B cell (primary cell): ENCODE measurements at regions of chr1 and their contacts with region 1.

Region 1: GRCh38 chr1:31422505-31423319 is 9.7 kb downstream of the SERINC2 start:
- DNase-seq: peak; percentile 84
- ATAC-seq: peak; percentile 46
- H3K4me3 ChIP-seq: peak overlapping the region in 3 of 5 experiments; percentile 2 to 51 (median 15)
- H3K4me3 Mint-ChIP-seq: peak overlapping the region; percentile 74
- H3K27ac ChIP-seq: peak overlapping the region; percentile 29 to 50
- H3K27ac Mint-ChIP-seq: peak overlapping the region; percentile 78
- H3K4me1 ChIP-seq: peaks cover 21 to 23% of the 10 kb centered on the region in 2 donors
- H3K4me1 Mint-ChIP-seq: peaks cover 26% of the 10 kb centered on the region
- H3K27me3 ChIP-seq: peaks cover 0 to 5% (median under 1%) of the 10 kb centered on the region in 4 experiments
- H3K27me3 Mint-ChIP-seq: peaks cover 8% of the 10 kb centered on the region
- CTCF ChIP-seq: peak; percentile 96

Region 2: GRCh38 chr1:31155216-31155841 is 267.4 kb before region 1 on chr1:
- CTCF ChIA-PET with region 1: interaction called, 3 read pairs
- POLR2A ChIA-PET with region 1: no interaction called
- intact Hi-C with region 1: loop called (anchors 2 kb)
- DNase-seq: peak; percentile 75
- ATAC-seq: peak; percentile 80
- H3K4me3 ChIP-seq: peak overlapping the region; percentile 53 to 76 (median 67)
- H3K4me3 Mint-ChIP-seq: peak overlapping the region; percentile 90
- H3K27ac ChIP-seq: peak overlapping the region in 1 of 2 donors; percentile 39
- H3K27ac Mint-ChIP-seq: peak overlapping the region; percentile 80
- H3K4me1 ChIP-seq: peaks cover 5 to 14% of the 10 kb centered on the region in 2 donors
- H3K4me1 Mint-ChIP-seq: peaks cover 9% of the 10 kb centered on the region
- H3K27me3 ChIP-seq: no peaks in the 10 kb centered on the region
- H3K27me3 Mint-ChIP-seq: no peaks in the 10 kb centered on the region
- CTCF ChIP-seq: peak; percentile 55

Region 3: GRCh38 chr1:31166462-31166861 is 256.2 kb before region 1 on chr1:
- CTCF ChIA-PET with region 1: interaction called, 10 read pairs
- POLR2A ChIA-PET with region 1: no interaction called
- intact Hi-C with region 1: no loop called
- DNase-seq: no peak
- ATAC-seq: no peak
- H3K4me3 ChIP-seq: no peak overlapping the region
- H3K4me3 Mint-ChIP-seq: no peak overlapping the region
- H3K27ac ChIP-seq: no peak overlapping the region
- H3K27ac Mint-ChIP-seq: no peak overlapping the region
- H3K4me1 ChIP-seq: no peaks in the 10 kb centered on the region
- H3K4me1 Mint-ChIP-seq: peaks cover 3% of the 10 kb centered on the region
- H3K27me3 ChIP-seq: no peaks in the 10 kb centered on the region
- H3K27me3 Mint-ChIP-seq: peaks cover 10% of the 10 kb centered on the region
- CTCF ChIP-seq: no peak

Region 4: DNA sequence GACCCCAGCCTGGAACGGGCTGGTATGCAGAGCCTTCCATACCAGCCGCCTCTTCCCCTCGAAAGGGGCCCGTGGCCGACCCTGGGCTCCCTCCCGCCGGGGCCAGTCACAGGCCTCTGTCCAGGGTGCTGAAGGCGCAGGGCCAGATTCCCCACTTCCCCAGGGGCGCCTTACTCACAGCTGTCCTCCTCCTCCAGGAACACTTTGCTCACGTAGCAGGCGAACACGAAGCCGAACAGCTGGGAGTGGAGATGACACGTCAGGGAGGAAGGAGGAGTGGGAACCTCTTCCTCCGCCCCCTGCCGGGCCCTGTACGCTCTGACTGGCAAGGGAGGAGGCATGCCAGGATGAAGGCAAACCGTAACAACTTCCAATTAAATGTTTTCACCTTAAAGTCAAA is 240.4 kb before region 1 on chr1:
- CTCF ChIA-PET with region 1: interaction called, 48 read pairs
- POLR2A ChIA-PET with region 1: no interaction called
- intact Hi-C with region 1: no loop called
- DNase-seq: peak; percentile 61
- ATAC-seq: peak; percentile 52
- H3K4me3 ChIP-seq: no peak overlapping the region
- H3K4me3 Mint-ChIP-seq: peak overlapping the region; percentile 34
- H3K27ac ChIP-seq: no peak overlapping the region
- H3K27ac Mint-ChIP-seq: no peak overlapping the region
- H3K4me1 ChIP-seq: peaks cover 10 to 15% of the 10 kb centered on the region in 2 donors
- H3K4me1 Mint-ChIP-seq: peaks cover 6% of the 10 kb centered on the region
- H3K27me3 ChIP-seq: peaks cover 0 to 44% (median 14%) of the 10 kb centered on the region in 4 experiments
- H3K27me3 Mint-ChIP-seq: peaks cover 54% of the 10 kb centered on the region
- CTCF ChIP-seq: no peak

Region 5: GRCh38 chr1:31296486-31297276 is 126.0 kb before region 1 on chr1 and contains the starts of genes SNRNP40 and ZCCHC17:
- CTCF ChIA-PET with region 1: interaction called, 7 read pairs
- POLR2A ChIA-PET with region 1: no interaction called
- intact Hi-C with region 1: loop called (anchors 1 kb)
- DNase-seq: peak; percentile 98
- ATAC-seq: peak; percentile 97
- H3K4me3 ChIP-seq: peak within 1 kb of the TSS; percentile 68 to 99 (median 77)
- H3K4me3 Mint-ChIP-seq: no peak within 1 kb of the TSS
- H3K27ac ChIP-seq: peak within 1 kb of the TSS; percentile 82 to 93
- H3K27ac Mint-ChIP-seq: peak within 1 kb of the TSS; percentile 63
- H3K4me1 ChIP-seq: peaks cover 23 to 25% of the 10 kb centered on the region in 2 donors
- H3K4me1 Mint-ChIP-seq: peaks cover 24% of the 10 kb centered on the region
- H3K27me3 ChIP-seq: no peaks in the 10 kb centered on the region
- H3K27me3 Mint-ChIP-seq: no peaks in the 10 kb centered on the region
- CTCF ChIP-seq: no peak
- total RNA-seq, gene SNRNP40: 65.6 and 67.7 TPM in 2 replicates
- total RNA-seq, gene ZCCHC17: 20.3 and 21.5 TPM in 2 replicates

Region 6: DNA sequence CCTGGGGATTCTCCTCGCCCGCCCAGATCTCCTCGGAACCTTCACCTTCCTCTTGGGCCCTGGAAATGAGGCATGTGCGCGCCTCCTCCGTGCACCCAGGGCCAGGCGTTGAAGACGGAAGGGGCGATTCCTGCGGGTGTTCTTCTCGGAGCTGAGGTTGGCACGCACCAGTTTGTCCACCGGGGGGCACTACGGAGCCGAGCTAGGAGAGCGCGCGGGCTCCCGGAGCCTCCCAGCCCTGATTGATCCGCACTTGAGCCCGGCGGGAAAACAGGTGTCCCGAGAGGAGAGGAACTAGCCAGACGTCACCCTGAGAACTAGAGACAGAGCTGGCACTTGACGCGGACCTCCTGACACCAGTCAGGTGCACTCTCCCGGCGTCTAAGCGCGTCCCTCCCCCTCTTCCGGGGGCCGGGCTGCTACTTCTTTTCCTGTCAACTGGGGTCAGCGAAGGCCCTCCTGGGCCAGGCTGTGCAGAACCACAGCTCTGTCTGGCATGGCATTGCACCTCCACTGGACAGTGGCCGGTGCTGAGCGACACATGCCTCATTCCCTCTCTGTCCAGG is 28.0 kb before region 1 on chr1:
- CTCF ChIA-PET with region 1: interaction called, 133 read pairs
- POLR2A ChIA-PET with region 1: no interaction called
- intact Hi-C with region 1: loop called (anchors 1 kb)
- DNase-seq: peak; percentile 87
- ATAC-seq: peak; percentile 93
- H3K4me3 ChIP-seq: peak overlapping the region; percentile 27 to 71 (median 55)
- H3K4me3 Mint-ChIP-seq: peak overlapping the region; percentile 87
- H3K27ac ChIP-seq: no peak overlapping the region
- H3K27ac Mint-ChIP-seq: peak overlapping the region; percentile 26
- H3K4me1 ChIP-seq: peaks cover 8 to 13% of the 10 kb centered on the region in 2 donors
- H3K4me1 Mint-ChIP-seq: peaks cover 13% of the 10 kb centered on the region
- H3K27me3 ChIP-seq: no peaks in the 10 kb centered on the region
- H3K27me3 Mint-ChIP-seq: no peaks in the 10 kb centered on the region
- CTCF ChIP-seq: peak; percentile 91

Region 7: DNA sequence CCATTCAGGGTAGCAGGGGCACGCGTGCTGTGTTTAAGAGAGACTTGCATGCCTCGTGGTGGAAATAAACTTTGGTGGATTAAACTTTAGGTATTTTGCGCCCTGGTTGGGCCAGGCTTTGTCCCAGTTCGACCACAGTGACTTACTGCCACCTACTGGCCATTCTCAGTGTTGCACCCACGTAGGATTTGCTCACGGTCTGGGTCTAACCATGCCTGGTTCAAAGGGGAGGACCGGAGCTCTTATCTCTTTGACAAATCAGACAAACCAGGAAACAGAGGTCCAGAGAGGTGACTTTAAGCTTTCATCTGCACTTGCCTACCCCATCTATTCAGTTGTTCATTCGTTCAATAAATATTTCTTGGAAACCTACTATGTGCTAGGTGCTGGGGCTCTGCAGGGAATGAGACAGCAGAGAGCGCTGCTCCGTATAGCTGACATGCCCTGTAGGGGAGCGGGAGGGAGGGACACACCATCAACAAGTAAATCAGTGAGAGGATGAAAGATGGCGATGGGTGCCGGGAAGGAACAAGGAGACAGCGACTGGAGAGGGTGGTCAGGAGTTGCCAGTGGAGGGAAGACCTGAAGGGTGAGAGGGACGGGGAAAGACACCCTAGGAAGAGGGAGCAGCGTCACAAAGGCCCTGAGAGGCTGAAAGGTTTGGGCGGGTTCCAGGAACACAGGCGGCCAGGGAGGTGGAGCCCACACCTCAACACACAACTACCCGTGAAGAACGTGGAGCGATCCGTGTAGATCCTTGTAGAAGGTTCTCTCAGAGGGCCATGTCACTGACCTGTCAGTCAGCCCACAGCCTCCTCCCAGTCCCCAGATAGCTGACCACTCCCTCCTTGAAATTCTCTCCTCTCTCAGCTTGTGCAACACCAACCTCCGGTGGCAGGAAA is 126.4 kb after region 1 on chr1:
- CTCF ChIA-PET with region 1: interaction called, 26 read pairs
- POLR2A ChIA-PET with region 1: no interaction called
- intact Hi-C with region 1: loop called (anchors 1 kb)
- DNase-seq: peak; percentile 89
- ATAC-seq: peak; percentile 98
- H3K4me3 ChIP-seq: no peak overlapping the region
- H3K4me3 Mint-ChIP-seq: peak overlapping the region; percentile 29
- H3K27ac ChIP-seq: no peak overlapping the region
- H3K27ac Mint-ChIP-seq: no peak overlapping the region
- H3K4me1 ChIP-seq: peaks cover 6 to 11% of the 10 kb centered on the region in 2 donors
- H3K4me1 Mint-ChIP-seq: peaks cover 10% of the 10 kb centered on the region
- H3K27me3 ChIP-seq: peaks cover 0 to 6% (median 2%) of the 10 kb centered on the region in 4 experiments
- H3K27me3 Mint-ChIP-seq: peaks cover 11% of the 10 kb centered on the region
- CTCF ChIP-seq: peak; percentile 94